ENCODE measurements at regions of chr5 and their contacts with region 1.

Region 1: DNA sequence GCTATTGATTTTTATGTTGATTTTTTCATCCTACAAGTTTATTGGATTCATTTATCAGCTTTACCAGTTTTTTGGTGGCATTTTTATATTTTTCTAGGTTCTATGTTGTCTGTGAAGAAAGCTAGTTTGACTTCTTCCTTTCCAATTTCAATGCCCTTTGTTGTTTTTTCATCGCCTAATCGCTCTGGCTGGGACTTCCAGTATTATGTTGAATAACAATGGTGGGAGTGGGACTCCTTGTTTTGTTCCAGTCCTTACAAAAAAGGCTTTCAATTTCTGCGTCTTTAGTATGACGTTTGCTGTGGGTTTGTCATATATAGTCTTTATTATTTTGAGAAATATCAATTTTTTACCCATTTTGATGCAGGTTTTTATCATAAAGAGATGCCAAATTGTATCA is 175.6 kb upstream of the CCNH start:
- DNase-seq: no peak
- H3K4me3 ChIP-seq: no peak overlapping the region
- CTCF ChIP-seq: no peak

Region 2: DNA sequence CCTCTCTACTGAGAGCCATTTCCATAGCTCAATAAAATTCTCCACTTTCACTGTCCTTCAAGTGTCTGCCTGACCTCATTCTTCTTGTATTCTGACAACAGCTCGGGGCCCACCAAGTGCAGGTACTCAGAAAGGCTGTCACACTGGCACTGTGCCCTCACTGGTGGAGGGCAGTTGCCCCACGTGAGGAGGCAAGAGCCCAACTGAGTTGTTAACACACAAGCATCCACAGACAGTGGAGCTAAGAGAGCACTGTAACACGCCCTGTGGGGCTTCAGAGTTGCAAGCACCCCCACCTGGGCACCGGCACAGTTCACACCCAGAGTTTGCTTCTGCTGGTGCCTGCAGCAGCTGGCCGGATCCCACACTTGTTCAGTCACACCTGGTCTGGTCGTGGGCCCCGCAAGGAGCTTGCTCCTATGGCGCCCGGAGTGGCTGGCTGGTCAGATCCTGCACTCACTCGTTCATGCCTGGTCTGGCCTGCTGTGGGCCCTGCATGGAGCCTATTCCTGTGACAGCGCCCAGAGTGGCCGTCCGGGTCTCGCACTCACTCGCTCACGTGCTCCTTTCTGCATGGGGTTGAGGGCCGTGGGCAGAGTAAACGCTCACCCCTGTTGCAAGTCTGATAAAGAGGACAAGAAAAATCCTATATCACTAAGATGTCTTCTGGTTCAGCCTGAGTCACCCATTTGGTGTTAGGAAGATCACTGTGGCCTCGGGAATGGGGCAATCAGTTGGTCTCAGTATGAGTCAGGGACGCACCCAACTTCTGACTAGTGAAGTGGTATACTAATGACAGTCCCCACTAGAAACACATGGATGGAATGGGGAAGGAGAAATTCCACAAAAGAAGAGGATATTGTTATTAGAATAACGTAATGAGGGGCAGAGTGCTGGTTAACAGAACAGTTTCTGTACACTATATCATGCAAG is 88.6 kb before region 1 on chr5:
- in situ Hi-C with region 1: loop called (anchors 5 kb)
- DNase-seq: no peak
- H3K4me3 ChIP-seq: no peak overlapping the region
- CTCF ChIP-seq: no peak

Measured in astrocyte of the cerebellum (primary cell).